ENCODE measurements at regions of chr5 and their contacts with region 1.

Region 1: GRCh38 chr5:131364507-131365050 is 100.7 kb downstream of the CDC42SE2 start:
- DNase-seq: peak in 6 of 9 donors; percentile 45 to 66 (median 57)
- ATAC-seq: peak; percentile 70
- H3K4me3 ChIP-seq: no peak overlapping the region
- H3K4me3 Mint-ChIP-seq: peak overlapping the region; percentile 34 to 70 (median 60)
- H3K27ac ChIP-seq: peak overlapping the region; percentile 61
- H3K27ac Mint-ChIP-seq: peak overlapping the region; percentile 78 to 97 (median 85)
- H3K4me1 ChIP-seq: peaks cover 34 to 40% of the 10 kb centered on the region in 2 donors
- H3K4me1 Mint-ChIP-seq: peaks cover 41 to 91% (median 79%) of the 10 kb centered on the region in 7 donors
- H3K27me3 ChIP-seq: no peaks in the 10 kb centered on the region
- H3K27me3 Mint-ChIP-seq: no peaks in the 10 kb centered on the region

Region 2: DNA sequence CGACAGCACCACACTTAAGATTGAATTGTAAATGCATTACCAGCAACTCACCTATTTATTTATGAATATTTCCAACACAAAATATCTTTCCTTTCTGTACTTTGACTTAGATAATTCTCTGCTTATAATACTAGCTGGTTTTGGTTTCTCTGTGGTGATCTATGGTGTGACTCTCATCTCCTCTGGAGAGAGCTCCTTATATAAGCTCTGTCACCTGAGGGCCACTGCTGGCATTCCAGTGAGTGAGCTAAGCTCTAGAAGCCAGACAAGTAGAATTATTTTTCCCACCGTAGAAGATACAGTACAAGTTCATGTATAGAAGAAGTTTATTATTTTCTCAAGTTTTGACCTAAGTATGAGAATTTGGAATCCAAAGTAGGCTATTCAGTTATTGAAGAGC is 10.8 kb after region 1 on chr5:
- CTCF ChIA-PET with region 1: interaction called, 8 read pairs
- POLR2A ChIA-PET with region 1: interaction called, 18 read pairs
- intact Hi-C with region 1: loop called (anchors 1 kb)
- DNase-seq: peak in 1 of 9 donors; percentile 60
- ATAC-seq: no peak
- H3K4me3 ChIP-seq: no peak overlapping the region
- H3K4me3 Mint-ChIP-seq: peak overlapping the region in 8 of 10 donors; percentile 15 to 80 (median 56)
- H3K27ac ChIP-seq: peak overlapping the region; percentile 97
- H3K27ac Mint-ChIP-seq: peak overlapping the region; percentile 86 to 99 (median 94)
- H3K4me1 ChIP-seq: peaks cover 80 to 91% of the 10 kb centered on the region in 2 donors
- H3K4me1 Mint-ChIP-seq: peaks cover 44 to 100% (median 91%) of the 10 kb centered on the region in 7 donors
- H3K27me3 ChIP-seq: no peaks in the 10 kb centered on the region
- H3K27me3 Mint-ChIP-seq: no peaks in the 10 kb centered on the region

Measured in naive thymus-derived CD4-positive, alpha-beta T cell (primary cell).